HCT116 (cell line): ENCODE measurements at regions of chr1 and their contacts with region 1.

Region 1: GRCh38 chr1:23168457-23169194 is at the start of gene LUZP1:
- DNase-seq: peak; percentile 70
- ATAC-seq: peak; percentile 72
- H3K4me3 ChIP-seq: peak within 1 kb of the TSS; percentile 86 to 89
- H3K27ac ChIP-seq: peak within 1 kb of the TSS; percentile 75
- H3K4me1 ChIP-seq: peaks cover 8 to 26% of the 10 kb centered on the region in 2 experiments
- H3K27me3 ChIP-seq: no peaks in the 10 kb centered on the region
- CTCF ChIP-seq: no peak
- POLR2A ChIP-seq: peak; percentile 76
- RAD21 ChIP-seq: no peak
- total RNA-seq, gene LUZP1: 22.4 TPM

Region 2: GRCh38 chr1:23184212-23184934 is 15.7 kb after region 1 on chr1:
- CTCF ChIA-PET with region 1: interaction called, 22 read pairs
- POLR2A ChIA-PET with region 1: interaction called, 5 read pairs
- RAD21 ChIA-PET with region 1: interaction called in 1 of 2 experiments, 6 read pairs
- intact Hi-C with region 1: no loop called
- DNase-seq: no peak
- ATAC-seq: peak; percentile 59
- H3K4me3 ChIP-seq: no peak overlapping the region
- H3K27ac ChIP-seq: no peak overlapping the region
- H3K4me1 ChIP-seq: peaks cover 17 to 26% of the 10 kb centered on the region in 2 experiments
- H3K27me3 ChIP-seq: no peaks in the 10 kb centered on the region
- CTCF ChIP-seq: peak; percentile 59 to 95 (median 76)
- POLR2A ChIP-seq: no peak
- RAD21 ChIP-seq: peak; percentile 96

Region 3: GRCh38 chr1:23524716-23525401 is 356.2 kb after region 1 on chr1:
- CTCF ChIA-PET with region 1: no interaction called
- POLR2A ChIA-PET with region 1: no interaction called
- RAD21 ChIA-PET with region 1: interaction called in 1 of 2 experiments, 10 read pairs
- intact Hi-C with region 1: no loop called
- DNase-seq: no peak
- ATAC-seq: no peak
- H3K4me3 ChIP-seq: no peak overlapping the region
- H3K27ac ChIP-seq: no peak overlapping the region
- H3K4me1 ChIP-seq: peaks cover 36 to 48% of the 10 kb centered on the region in 2 experiments
- H3K27me3 ChIP-seq: no peaks in the 10 kb centered on the region
- CTCF ChIP-seq: no peak
- POLR2A ChIP-seq: no peak
- RAD21 ChIP-seq: no peak